CD8-positive, alpha-beta T cell (primary cell): ENCODE measurements at regions of chr7 and their contacts with region 1.

Region 1: DNA sequence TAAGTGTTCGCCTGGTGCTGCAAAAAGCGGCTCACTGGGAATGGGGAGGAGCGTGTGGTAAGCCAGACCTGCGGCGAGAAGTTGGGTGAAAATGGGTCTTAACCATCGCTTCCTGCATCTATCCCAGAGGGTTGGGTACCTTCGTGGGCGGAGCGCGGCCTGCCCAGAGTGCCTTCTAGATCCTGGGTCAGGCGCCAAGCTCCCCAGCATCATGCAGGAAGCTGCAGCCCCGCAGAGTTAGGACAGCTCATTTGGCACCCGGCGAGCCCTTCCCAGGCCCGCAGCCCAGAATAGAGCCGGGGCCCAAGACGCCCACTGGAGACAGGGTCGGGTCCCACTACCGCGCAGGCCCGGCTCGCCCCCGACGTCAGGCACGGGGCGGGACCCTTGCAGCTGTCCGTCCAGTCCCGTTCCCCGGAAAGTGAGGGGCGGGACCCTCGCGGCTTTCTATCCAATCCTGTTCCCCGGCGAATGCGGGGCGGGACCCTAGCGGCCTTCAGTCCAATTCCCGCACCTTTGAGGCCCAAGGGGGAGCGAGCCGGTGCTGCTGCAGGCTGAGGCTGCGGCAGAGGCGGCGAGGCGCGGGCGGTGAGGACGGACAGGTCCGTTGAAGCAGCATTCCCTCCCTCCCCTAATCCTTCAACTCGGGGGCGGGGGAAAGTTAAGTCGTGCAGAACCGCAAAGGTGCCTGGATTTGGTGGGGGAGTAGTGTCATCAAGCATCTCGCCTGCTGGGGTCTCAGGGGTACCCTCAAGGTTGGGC is at the start of gene CROT:
- DNase-seq: peak; percentile 84 to 96 (median 94)
- ATAC-seq: peak; percentile 96
- H3K4me3 ChIP-seq: peak within 1 kb of the TSS; percentile 91 to 96
- H3K4me3 Mint-ChIP-seq: peak within 1 kb of the TSS; percentile 95
- H3K27ac ChIP-seq: peak within 1 kb of the TSS; percentile 87 to 89
- H3K27ac Mint-ChIP-seq: peak within 1 kb of the TSS; percentile 96
- H3K4me1 ChIP-seq: peaks cover 25% of the 10 kb centered on the region
- H3K4me1 Mint-ChIP-seq: peaks cover 50% of the 10 kb centered on the region
- H3K27me3 ChIP-seq: no peaks in the 10 kb centered on the region
- H3K27me3 Mint-ChIP-seq: no peaks in the 10 kb centered on the region
- CTCF ChIP-seq: no peak
- total RNA-seq, gene CROT: 5.3 to 7.2 TPM

Region 2: DNA sequence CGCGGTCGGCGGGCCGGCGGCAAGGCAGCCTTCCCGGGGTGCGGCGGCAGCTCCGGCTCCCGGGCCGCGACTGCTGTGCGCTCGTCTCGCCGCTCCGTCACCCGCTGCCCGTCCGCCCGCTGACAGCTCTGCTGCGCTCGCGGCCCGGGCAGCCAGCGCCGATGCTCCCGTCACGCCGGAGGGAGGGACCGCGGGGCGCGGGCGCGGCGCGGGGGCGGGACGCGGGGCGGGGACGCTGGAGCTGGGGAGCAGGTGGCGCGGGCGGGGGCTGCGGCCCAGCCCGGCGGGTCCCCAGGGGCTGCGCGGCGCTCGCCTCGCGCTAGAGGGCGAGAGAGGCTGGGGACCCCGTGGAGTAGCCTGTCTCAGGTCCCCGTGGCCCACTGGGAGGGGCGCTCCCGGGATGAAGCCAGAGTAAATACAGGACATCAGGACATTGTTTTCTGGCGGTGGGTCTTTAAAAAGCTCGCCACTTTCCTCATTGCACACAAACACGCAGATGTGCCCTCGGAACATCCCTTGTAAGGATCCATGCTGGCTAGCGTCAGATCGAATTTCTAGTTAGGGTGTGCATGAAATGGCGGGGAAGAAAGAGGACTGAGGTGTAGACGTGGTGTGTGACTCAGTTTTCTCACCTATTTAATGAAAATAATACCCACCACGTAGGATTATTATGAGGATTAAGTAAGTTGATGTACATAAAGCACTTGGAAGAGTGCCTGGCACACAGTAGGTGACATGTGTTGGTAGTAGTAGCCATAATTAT is 285.6 kb before region 1 on chr7 and contains the start of gene ELAPOR2:
- CTCF ChIA-PET with region 1: no interaction called
- POLR2A ChIA-PET with region 1: no interaction called
- intact Hi-C with region 1: loop called (anchors 1 to 10 kb)
- DNase-seq: peak; percentile 64 to 89 (median 80)
- ATAC-seq: peak; percentile 94
- H3K4me3 ChIP-seq: peak within 1 kb of the TSS; percentile 43 to 62
- H3K4me3 Mint-ChIP-seq: peak within 1 kb of the TSS; percentile 87
- H3K27ac ChIP-seq: peak within 1 kb of the TSS; percentile 16 to 38
- H3K27ac Mint-ChIP-seq: peak within 1 kb of the TSS; percentile 77
- H3K4me1 ChIP-seq: peaks cover 10% of the 10 kb centered on the region
- H3K4me1 Mint-ChIP-seq: peaks cover 16% of the 10 kb centered on the region
- H3K27me3 ChIP-seq: no peaks in the 10 kb centered on the region
- H3K27me3 Mint-ChIP-seq: peaks cover 5% of the 10 kb centered on the region
- CTCF ChIP-seq: no peak
- total RNA-seq, gene ELAPOR2: 5.1 to 5.7 TPM

Region 3: DNA sequence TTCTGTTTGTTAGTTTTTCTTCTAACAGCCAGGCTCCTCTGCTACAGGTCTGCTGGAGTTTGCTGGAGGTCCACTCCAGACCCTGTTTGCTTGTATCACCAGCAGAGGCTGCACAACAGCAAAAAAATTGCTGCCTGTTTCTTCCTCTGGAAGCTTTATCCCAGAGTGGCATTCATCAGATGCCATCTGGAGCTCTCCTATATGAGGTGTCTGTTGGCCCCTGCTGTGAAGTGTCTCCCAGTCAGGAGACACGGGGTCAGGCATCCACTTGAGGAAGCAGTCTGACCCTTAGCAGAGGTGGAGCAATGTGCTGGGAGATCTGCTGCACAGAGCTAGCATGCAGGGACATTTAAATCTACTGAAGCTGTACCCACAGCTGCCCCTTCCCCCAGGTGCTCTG is 26.6 kb before region 1 on chr7:
- CTCF ChIA-PET with region 1: interaction called, 3 read pairs
- POLR2A ChIA-PET with region 1: interaction called, 4 read pairs
- intact Hi-C with region 1: loop called in 1 of 2 experiments (anchors 2 kb)
- DNase-seq: no peak
- ATAC-seq: no peak
- H3K4me3 ChIP-seq: peak overlapping the region in 1 of 2 experiments; percentile 34
- H3K4me3 Mint-ChIP-seq: peak overlapping the region; percentile 81
- H3K27ac ChIP-seq: peak overlapping the region in 1 of 2 experiments; percentile 51
- H3K27ac Mint-ChIP-seq: peak overlapping the region; percentile 90
- H3K4me1 ChIP-seq: no peaks in the 10 kb centered on the region
- H3K4me1 Mint-ChIP-seq: peaks cover 18% of the 10 kb centered on the region
- H3K27me3 ChIP-seq: no peaks in the 10 kb centered on the region
- H3K27me3 Mint-ChIP-seq: peaks cover 2% of the 10 kb centered on the region
- CTCF ChIP-seq: no peak

Region 4: DNA sequence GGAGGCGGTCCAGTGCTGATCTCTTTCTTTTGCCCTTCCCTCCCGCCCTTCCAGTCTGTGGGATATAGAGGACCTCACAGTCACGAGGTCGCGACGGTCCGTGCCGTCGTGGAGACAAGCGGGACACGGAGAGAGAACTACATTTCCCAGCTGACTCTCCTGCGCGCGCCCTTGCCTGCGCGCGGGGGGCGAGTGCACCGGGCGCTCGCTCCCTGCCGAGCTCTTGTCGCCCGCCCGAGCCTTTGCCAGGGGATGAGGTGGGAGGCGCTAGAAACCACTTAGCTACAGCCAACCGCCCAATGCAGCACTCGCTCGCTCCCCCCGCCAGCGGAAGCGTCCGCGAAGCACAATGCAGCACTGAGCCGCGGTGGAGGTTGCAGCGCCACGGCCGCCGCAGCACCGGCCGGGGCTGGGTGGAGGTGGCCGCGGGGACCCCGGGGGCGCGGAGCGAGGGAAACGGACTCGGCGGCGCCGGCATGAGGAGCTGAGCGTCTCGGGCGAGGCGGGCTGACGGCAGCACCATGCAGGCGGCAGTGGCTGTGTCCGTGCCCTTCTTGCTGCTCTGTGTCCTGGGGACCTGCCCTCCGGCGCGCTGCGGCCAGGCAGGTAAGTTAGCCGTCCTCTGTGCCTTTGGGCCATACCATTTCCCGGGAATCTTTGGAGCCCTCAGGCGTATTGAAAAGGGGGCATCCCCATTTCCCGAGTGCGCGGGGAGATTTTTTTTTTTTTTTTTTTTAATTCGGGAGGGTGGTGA is 588.8 kb after region 1 on chr7 and contains the start of gene ADAM22:
- CTCF ChIA-PET with region 1: no interaction called
- POLR2A ChIA-PET with region 1: interaction called, 3 read pairs
- intact Hi-C with region 1: loop called in 1 of 2 experiments (anchors 1 kb)
- DNase-seq: peak; percentile 65 to 94 (median 85)
- ATAC-seq: peak; percentile 94
- H3K4me3 ChIP-seq: peak within 1 kb of the TSS; percentile 73 to 82
- H3K4me3 Mint-ChIP-seq: peak within 1 kb of the TSS; percentile 89
- H3K27ac ChIP-seq: peak within 1 kb of the TSS; percentile 32 to 71
- H3K27ac Mint-ChIP-seq: peak within 1 kb of the TSS; percentile 79
- H3K4me1 ChIP-seq: peaks cover 7% of the 10 kb centered on the region
- H3K4me1 Mint-ChIP-seq: peaks cover 11% of the 10 kb centered on the region
- H3K27me3 ChIP-seq: no peaks in the 10 kb centered on the region
- H3K27me3 Mint-ChIP-seq: no peaks in the 10 kb centered on the region
- CTCF ChIP-seq: no peak
- total RNA-seq, gene ADAM22: 1.1 to 1.7 TPM

Region 5: GRCh38 chr7:88219781-88220747 is 874.7 kb after region 1 on chr7 and contains the start of gene SRI:
- CTCF ChIA-PET with region 1: no interaction called
- POLR2A ChIA-PET with region 1: no interaction called
- intact Hi-C with region 1: loop called (anchors 2 to 10 kb)
- DNase-seq: peak; percentile 87 to 95 (median 92)
- ATAC-seq: peak; percentile 97
- H3K4me3 ChIP-seq: peak within 1 kb of the TSS; percentile 81 to 86
- H3K4me3 Mint-ChIP-seq: peak within 1 kb of the TSS; percentile 95
- H3K27ac ChIP-seq: peak within 1 kb of the TSS; percentile 73 to 83
- H3K27ac Mint-ChIP-seq: peak within 1 kb of the TSS; percentile 97
- H3K4me1 ChIP-seq: peaks cover 21% of the 10 kb centered on the region
- H3K4me1 Mint-ChIP-seq: peaks cover 34% of the 10 kb centered on the region
- H3K27me3 ChIP-seq: no peaks in the 10 kb centered on the region
- H3K27me3 Mint-ChIP-seq: no peaks in the 10 kb centered on the region
- CTCF ChIP-seq: peak; percentile 97
- total RNA-seq, gene SRI: 38.5 to 43.9 TPM